HEK293 (cell line): ENCODE measurements at regions of chr2 and their contacts with region 1.

Region 1: GRCh38 chr2:44866152-44866551 is 75.3 kb upstream of the SIX3 start:
- H3K4me3 ChIP-seq: no peak overlapping the region
- H3K27ac ChIP-seq: no peak overlapping the region
- H3K4me1 ChIP-seq: no peaks in the 10 kb centered on the region
- CTCF ChIP-seq: no peak

Region 2: DNA sequence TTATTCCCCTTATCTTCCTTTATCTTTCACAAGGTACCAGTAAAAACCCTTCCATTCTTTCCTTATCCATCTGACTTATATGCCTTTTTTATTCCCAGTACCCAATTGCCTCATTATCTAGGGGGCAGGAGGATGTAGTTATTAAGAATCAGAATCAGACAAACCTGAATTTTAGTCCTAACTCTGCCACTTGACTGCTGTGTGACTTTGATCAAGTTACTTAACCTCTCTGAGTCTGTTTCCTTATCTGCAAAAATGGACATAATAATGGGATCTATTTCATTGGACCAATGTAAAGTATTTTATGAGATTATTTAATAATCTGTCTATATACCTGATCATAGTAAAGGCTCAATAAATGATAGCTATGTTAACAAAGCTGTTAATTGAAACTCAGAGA is 15.7 kb after region 1 on chr2:
- CTCF ChIA-PET with region 1: interaction called, 10 read pairs
- POLR2A ChIA-PET with region 1: no interaction called
- H3K4me3 ChIP-seq: no peak overlapping the region
- H3K27ac ChIP-seq: no peak overlapping the region
- H3K4me1 ChIP-seq: peaks cover 3% of the 10 kb centered on the region; the same call in 1 of the 2 replicates
- CTCF ChIP-seq: no peak